GM23248 (cell line): ENCODE measurements at regions of chr4 and their contacts with region 1.

Region 1: GRCh38 chr4:88533937-88534750 is 10.6 kb upstream of the PYURF start:
- DNase-seq: peak; percentile 98
- H3K4me3 ChIP-seq: peak overlapping the region; percentile 57
- H3K27ac ChIP-seq: peak overlapping the region; percentile 99
- H3K4me1 ChIP-seq: peaks cover 37% of the 10 kb centered on the region
- H3K27me3 ChIP-seq: no peaks in the 10 kb centered on the region

Region 2: GRCh38 chr4:88659055-88659889 is 125.1 kb after region 1 on chr4:
- in situ Hi-C with region 1: loop called (anchors 10 kb)
- DNase-seq: peak; percentile 87
- H3K4me3 ChIP-seq: no peak overlapping the region
- H3K27ac ChIP-seq: peak overlapping the region; percentile 95
- H3K4me1 ChIP-seq: peaks cover 49% of the 10 kb centered on the region
- H3K27me3 ChIP-seq: no peaks in the 10 kb centered on the region

Region 3: DNA sequence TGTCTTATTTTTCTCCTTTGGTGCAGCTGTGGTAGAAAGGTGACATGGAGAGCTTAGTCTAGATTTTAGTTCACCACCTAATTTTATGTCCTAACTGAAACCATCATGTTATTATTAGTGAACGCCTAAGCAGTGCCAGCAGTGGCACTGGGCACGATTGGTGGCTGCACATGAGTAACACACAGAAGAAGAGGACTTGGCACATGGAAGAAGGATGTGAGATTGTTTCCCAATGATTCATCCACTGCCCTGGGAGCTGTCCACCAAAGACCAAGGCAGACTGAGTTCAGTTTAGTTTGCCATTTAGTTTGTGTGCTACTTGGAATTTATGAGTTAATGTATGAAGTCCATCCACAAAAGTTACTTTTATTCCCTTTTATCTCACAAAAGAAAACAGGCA is 231.6 kb after region 1 on chr4:
- in situ Hi-C with region 1: no loop called
- DNase-seq: peak; percentile 89
- H3K4me3 ChIP-seq: no peak overlapping the region
- H3K27ac ChIP-seq: no peak overlapping the region
- H3K4me1 ChIP-seq: peaks cover 12% of the 10 kb centered on the region
- H3K27me3 ChIP-seq: no peaks in the 10 kb centered on the region

Region 4: GRCh38 chr4:89024051-89024675 is 490.0 kb after region 1 on chr4:
- in situ Hi-C with region 1: loop called (anchors 10 kb)
- DNase-seq: peak; percentile 87
- H3K4me3 ChIP-seq: no peak overlapping the region
- H3K27ac ChIP-seq: no peak overlapping the region
- H3K4me1 ChIP-seq: no peaks in the 10 kb centered on the region
- H3K27me3 ChIP-seq: no peaks in the 10 kb centered on the region